HepG2 (cell line): ENCODE measurements at regions of chr18 and their contacts with region 1.

Region 1: GRCh38 chr18:70431203-70431624 is 142.4 kb downstream of the SOCS6 start:
- DNase-seq: peak; percentile 98
- ATAC-seq: peak; percentile 81
- H3K4me3 ChIP-seq: no peak overlapping the region
- H3K27ac ChIP-seq: peak overlapping the region; percentile 75
- H3K4me1 ChIP-seq: peaks cover 53% of the 10 kb centered on the region
- H3K27me3 ChIP-seq: no peaks in the 10 kb centered on the region
- CTCF ChIP-seq: no peak
- EP300 ChIP-seq: peak; percentile 91 to 97
- POLR2A ChIP-seq: no peak
- RAD21 ChIP-seq: no peak

Region 2: DNA sequence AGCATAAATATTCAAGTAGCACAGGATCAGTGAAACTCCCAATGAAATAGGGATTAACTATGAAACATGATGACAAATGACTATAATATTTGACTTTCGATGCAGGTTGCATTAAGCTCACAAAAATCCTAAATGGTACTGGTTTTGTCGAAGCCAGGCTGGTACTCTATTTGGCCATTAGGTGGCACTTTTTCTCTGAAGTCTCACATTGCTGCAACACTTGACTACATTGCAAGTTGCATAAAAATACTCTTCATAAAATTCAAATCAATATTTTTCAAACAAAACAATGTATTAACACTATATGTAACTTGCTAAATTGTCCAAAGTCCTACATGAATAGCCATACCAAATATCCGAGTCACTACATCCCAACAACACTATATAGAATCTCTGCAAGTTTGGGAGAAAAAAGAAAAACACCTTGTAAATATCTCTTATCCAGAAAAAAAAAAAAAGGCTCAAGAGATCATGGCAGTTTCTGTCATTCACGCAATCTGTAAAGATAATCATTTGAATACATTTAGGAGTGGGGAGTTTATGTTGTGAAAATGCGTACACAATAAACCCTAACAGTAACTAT is 235.3 kb before region 1 on chr18:
- CTCF ChIA-PET with region 1: interaction called, 52 read pairs
- POLR2A ChIA-PET with region 1: interaction called, 7 read pairs
- in situ Hi-C with region 1: no loop called
- intact Hi-C with region 1: loop called (anchors 1 kb)
- DNase-seq: peak; percentile 35
- ATAC-seq: peak; percentile 63
- H3K4me3 ChIP-seq: no peak overlapping the region
- H3K27ac ChIP-seq: no peak overlapping the region
- H3K4me1 ChIP-seq: no peaks in the 10 kb centered on the region
- H3K27me3 ChIP-seq: no peaks in the 10 kb centered on the region
- CTCF ChIP-seq: peak; percentile 76
- EP300 ChIP-seq: no peak
- POLR2A ChIP-seq: no peak
- RAD21 ChIP-seq: peak; percentile 67

Region 3: GRCh38 chr18:70288851-70289328 is 142.3 kb before region 1 on chr18 and contains the start of gene SOCS6:
- CTCF ChIA-PET with region 1: no interaction called
- POLR2A ChIA-PET with region 1: no interaction called
- in situ Hi-C with region 1: loop called (anchors 5 kb)
- intact Hi-C with region 1: no loop called
- DNase-seq: no peak
- ATAC-seq: peak; percentile 65
- H3K4me3 ChIP-seq: peak within 1 kb of the TSS; percentile 91 to 95 (median 95)
- H3K27ac ChIP-seq: peak within 1 kb of the TSS; percentile 91
- H3K4me1 ChIP-seq: peaks cover 42% of the 10 kb centered on the region
- H3K27me3 ChIP-seq: no peaks in the 10 kb centered on the region; a peak in 1 of 5 replicates
- CTCF ChIP-seq: no peak
- EP300 ChIP-seq: no peak
- POLR2A ChIP-seq: peak in 1 of 2 experiments; percentile 50
- RAD21 ChIP-seq: peak; percentile 10; the same call in 1 of the 2 replicates
- total RNA-seq, gene SOCS6: 38.3 and 49.0 TPM in 2 replicates

Region 4: GRCh38 chr18:70310560-70311320 is 120.5 kb before region 1 on chr18:
- CTCF ChIA-PET with region 1: no interaction called
- POLR2A ChIA-PET with region 1: no interaction called
- in situ Hi-C with region 1: no loop called
- intact Hi-C with region 1: loop called (anchors 5 kb)
- DNase-seq: no peak
- ATAC-seq: peak; percentile 42; the same call in 1 of the 3 replicates
- H3K4me3 ChIP-seq: no peak overlapping the region
- H3K27ac ChIP-seq: peak overlapping the region; percentile 20
- H3K4me1 ChIP-seq: peaks cover 65% of the 10 kb centered on the region
- H3K27me3 ChIP-seq: no peaks in the 10 kb centered on the region
- CTCF ChIP-seq: no peak
- EP300 ChIP-seq: no peak
- POLR2A ChIP-seq: no peak
- RAD21 ChIP-seq: no peak

Region 5: GRCh38 chr18:70337139-70337972 is 93.9 kb before region 1 on chr18:
- CTCF ChIA-PET with region 1: no interaction called
- POLR2A ChIA-PET with region 1: interaction called, 46 read pairs
- in situ Hi-C with region 1: loop called (anchors 10 kb)
- intact Hi-C with region 1: loop called (anchors 2 kb)
- DNase-seq: peak; percentile 81
- ATAC-seq: peak; percentile 41
- H3K4me3 ChIP-seq: peak overlapping the region in 2 of 3 experiments; percentile 20 to 59; a peak in 3 of 6 replicates
- H3K27ac ChIP-seq: peak overlapping the region; percentile 97
- H3K4me1 ChIP-seq: peaks cover 76% of the 10 kb centered on the region
- H3K27me3 ChIP-seq: no peaks in the 10 kb centered on the region
- CTCF ChIP-seq: no peak
- EP300 ChIP-seq: peak in 1 of 2 experiments; percentile 52; a peak in 1 of 4 replicates
- POLR2A ChIP-seq: peak in 1 of 2 experiments; percentile 27; a peak in 1 of 4 replicates
- RAD21 ChIP-seq: no peak

Region 6: GRCh38 chr18:70384181-70384790 is 46.9 kb before region 1 on chr18:
- CTCF ChIA-PET with region 1: interaction called, 11 read pairs
- POLR2A ChIA-PET with region 1: interaction called, 17 read pairs
- in situ Hi-C with region 1: loop called (anchors 5 kb)
- intact Hi-C with region 1: loop called (anchors 1 kb)
- DNase-seq: peak; percentile 72
- ATAC-seq: no peak
- H3K4me3 ChIP-seq: no peak overlapping the region
- H3K27ac ChIP-seq: peak overlapping the region; percentile 6
- H3K4me1 ChIP-seq: peaks cover 79% of the 10 kb centered on the region
- H3K27me3 ChIP-seq: no peaks in the 10 kb centered on the region
- CTCF ChIP-seq: no peak
- EP300 ChIP-seq: no peak
- POLR2A ChIP-seq: no peak
- RAD21 ChIP-seq: no peak